ENCODE measurements at regions of chr7 and their contacts with region 1.

Region 1: GRCh38 chr7:76262683-76263402 is 39.6 kb upstream of the HSPB1 start:
- DNase-seq: no peak
- H3K4me3 ChIP-seq: no peak overlapping the region
- H3K27ac ChIP-seq: no peak overlapping the region
- H3K4me1 ChIP-seq: peaks cover 16 to 26% (median 24%) of the 10 kb centered on the region in 4 donors
- H3K27me3 ChIP-seq: peaks cover 7 to 76% (median 33%) of the 10 kb centered on the region in 4 donors
- CTCF ChIP-seq: peak; percentile 41 to 68 (median 52)
- EP300 ChIP-seq: no peak
- POLR2A ChIP-seq: no peak

Region 2: DNA sequence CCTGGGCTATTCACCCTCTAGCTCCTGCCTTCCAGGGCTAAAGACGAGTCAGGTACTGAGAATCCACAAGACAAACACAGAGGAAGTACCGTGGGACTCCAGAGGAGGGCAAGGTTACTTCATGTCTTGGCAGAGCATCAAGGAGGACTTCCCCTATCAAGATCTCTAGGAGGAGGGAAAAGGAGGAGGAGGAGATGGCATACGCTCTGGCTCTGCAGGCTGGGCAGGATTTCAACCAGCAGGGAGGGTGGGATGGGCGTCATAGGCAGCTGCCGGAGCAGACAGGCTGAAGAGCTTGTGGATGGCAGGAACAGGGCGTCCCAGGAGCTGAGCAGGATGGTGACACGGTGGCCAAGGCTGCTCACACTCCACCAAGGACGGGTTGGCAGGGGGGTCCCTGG is 193.6 kb before region 1 on chr7:
- intact Hi-C with region 1: no loop called
- DNase-seq: no peak
- H3K4me3 ChIP-seq: no peak overlapping the region
- H3K27ac ChIP-seq: peak overlapping the region; percentile 60 to 88 (median 84)
- H3K4me1 ChIP-seq: peaks cover 23 to 38% (median 35%) of the 10 kb centered on the region in 4 donors
- H3K27me3 ChIP-seq: no peaks in the 10 kb centered on the region
- CTCF ChIP-seq: peak in 2 of 3 experiments; percentile 34 to 36
- EP300 ChIP-seq: peak; percentile 72
- POLR2A ChIP-seq: no peak

Region 3: DNA sequence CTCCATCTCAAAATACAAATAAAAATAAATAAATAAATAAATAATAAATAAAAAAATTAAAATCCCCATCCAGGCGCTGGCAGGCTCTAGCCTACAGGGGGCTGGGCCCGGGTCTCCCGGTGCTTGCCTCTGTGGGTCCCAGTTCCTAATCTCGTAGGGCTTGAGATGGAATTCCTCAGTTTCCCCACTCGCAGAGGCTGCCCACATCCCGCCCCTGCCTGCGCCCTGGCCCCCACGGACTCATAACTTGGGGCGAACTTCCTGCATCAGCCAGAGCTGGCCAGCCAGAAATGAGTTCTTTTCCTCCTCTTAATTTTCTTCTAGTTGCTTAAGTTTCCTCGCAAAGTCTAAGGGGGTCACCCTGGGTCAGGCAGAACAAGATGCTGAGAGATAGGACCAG is 83.2 kb before region 1 on chr7:
- intact Hi-C with region 1: loop called (anchors 5 kb)
- DNase-seq: no peak
- H3K4me3 ChIP-seq: no peak overlapping the region
- H3K27ac ChIP-seq: no peak overlapping the region
- H3K4me1 ChIP-seq: peaks cover 0 to 10% (median 7%) of the 10 kb centered on the region in 4 donors
- H3K27me3 ChIP-seq: no peaks in the 10 kb centered on the region
- CTCF ChIP-seq: no peak
- EP300 ChIP-seq: no peak
- POLR2A ChIP-seq: no peak